Common myeloid progenitor, CD34-positive (primary cell): ENCODE measurements at regions of chr9 and their contacts with region 1.

Region 1: GRCh38 chr9:132982458-132982857 is 4.0 kb downstream of the GFI1B start:
- DNase-seq: peak in 2 of 3 donors; percentile 72 to 81
- H3K4me3 ChIP-seq: peak overlapping the region in 5 of 7 experiments; percentile 42 to 97 (median 51)
- H3K27ac ChIP-seq: peak overlapping the region in 1 of 2 experiments; percentile 83
- H3K4me1 ChIP-seq: peaks cover 22 to 98% (median 85%) of the 10 kb centered on the region in 4 experiments
- H3K27me3 ChIP-seq: no peaks in the 10 kb centered on the region

Region 2: DNA sequence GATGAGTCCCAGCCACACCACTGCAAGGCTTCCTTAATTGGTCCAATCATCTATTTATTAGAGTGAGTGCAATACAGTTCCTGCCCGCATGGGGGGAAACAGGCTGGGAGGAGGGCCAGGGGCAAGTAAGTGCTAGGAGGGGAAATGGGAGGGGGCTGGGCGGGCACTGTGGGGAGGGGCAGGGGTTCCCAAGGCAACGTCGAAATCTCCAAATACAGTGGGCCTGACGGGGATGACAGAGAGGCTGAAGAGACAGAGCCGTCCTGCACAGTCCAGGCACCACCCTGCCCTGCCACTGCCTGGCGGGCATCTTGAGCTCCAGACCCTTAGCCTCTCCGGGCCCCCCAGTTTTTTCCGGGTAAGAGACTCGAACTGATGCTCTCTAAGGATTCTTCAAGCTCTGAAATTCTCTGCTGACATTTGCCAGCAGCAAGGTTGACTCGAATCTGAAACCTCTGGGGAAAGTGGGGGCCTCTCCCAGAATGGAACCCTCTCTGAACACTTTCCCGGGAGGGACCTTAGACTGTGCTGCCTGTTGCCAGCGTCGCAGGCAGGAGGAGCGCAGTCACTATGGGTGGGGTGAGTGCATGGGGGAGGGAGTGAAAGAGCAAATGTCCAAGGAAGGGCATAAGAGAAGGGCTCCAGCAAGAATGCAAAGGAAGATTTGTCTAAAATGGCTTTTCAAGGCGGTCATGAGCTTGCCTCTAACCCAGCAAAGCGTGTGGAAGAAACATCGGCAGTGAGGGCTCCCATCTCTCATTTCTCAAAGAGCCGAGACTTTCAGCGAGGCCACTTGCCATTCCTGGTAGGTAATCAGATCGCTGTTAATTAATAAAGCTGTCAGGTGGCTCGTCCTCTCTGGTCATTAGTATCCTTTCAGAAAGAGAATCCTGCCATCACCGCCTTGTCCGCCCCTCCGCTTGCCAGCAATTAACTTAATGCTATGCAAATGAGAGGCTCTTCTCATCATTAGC is 213.2 kb before region 1 on chr9:
- CTCF ChIA-PET with region 1: no interaction called
- POLR2A ChIA-PET with region 1: no interaction called
- DNase-seq: peak; percentile 86 to 92 (median 92)
- H3K4me3 ChIP-seq: peak overlapping the region; percentile 65 to 98 (median 90)
- H3K27ac ChIP-seq: peak overlapping the region; percentile 85 to 92
- H3K4me1 ChIP-seq: peaks cover 3 to 21% (median 20%) of the 10 kb centered on the region in 4 experiments
- H3K27me3 ChIP-seq: no peaks in the 10 kb centered on the region

Region 3: GRCh38 chr9:133004091-133004998 is 21.9 kb after region 1 on chr9:
- CTCF ChIA-PET with region 1: interaction called, 144 read pairs
- POLR2A ChIA-PET with region 1: interaction called, 78 read pairs
- DNase-seq: peak; percentile 95 to 99 (median 98)
- H3K4me3 ChIP-seq: peak overlapping the region in 6 of 7 experiments; percentile 29 to 66 (median 35)
- H3K27ac ChIP-seq: peak overlapping the region; percentile 77 to 89
- H3K4me1 ChIP-seq: peaks cover 9 to 95% (median 84%) of the 10 kb centered on the region in 4 experiments
- H3K27me3 ChIP-seq: no peaks in the 10 kb centered on the region

Region 4: DNA sequence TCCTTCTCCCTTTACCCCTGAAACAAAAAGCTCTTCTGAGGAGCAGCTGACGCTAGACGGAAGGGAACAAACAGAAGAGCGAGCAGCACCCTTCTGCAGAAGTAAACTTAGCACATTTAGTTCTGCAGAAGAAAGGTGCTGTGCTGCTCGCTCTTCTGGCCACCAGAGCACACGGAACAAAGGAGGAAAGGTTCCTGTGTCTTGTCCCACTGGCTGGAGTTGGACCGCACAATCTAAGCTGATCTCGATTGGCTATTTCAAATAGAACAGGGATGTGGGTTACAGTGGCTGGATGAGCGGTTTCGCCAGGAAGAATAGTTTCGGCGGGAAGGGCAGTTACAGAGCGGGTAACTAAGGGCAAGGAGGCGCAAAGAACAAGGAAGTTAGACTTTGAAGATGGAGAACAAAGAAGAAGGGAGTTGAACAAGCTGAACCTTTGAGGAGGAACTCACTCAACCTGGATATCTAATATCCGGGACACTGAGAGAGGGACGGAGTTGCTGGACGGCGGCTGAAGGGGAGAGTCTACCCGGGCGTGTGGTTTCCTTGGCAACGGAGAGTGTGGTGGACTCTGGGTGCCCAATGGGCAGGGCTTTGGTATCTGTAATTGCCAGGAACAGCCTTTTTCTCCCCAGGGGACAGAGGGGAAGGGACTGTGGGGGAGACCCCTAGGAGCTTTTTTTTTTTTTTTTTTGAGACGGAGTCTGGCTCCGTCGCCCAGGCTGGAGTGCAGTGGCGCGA is 55.5 kb after region 1 on chr9:
- CTCF ChIA-PET with region 1: no interaction called
- POLR2A ChIA-PET with region 1: no interaction called
- DNase-seq: no peak
- H3K4me3 ChIP-seq: no peak overlapping the region
- H3K27ac ChIP-seq: no peak overlapping the region
- H3K4me1 ChIP-seq: peaks cover 0 to 21% (median 6%) of the 10 kb centered on the region in 4 experiments
- H3K27me3 ChIP-seq: no peaks in the 10 kb centered on the region